Heart right ventricle (tissue), 16 donors: ENCODE measurements at regions of chr1 and their contacts with region 1.

Region 1: DNA sequence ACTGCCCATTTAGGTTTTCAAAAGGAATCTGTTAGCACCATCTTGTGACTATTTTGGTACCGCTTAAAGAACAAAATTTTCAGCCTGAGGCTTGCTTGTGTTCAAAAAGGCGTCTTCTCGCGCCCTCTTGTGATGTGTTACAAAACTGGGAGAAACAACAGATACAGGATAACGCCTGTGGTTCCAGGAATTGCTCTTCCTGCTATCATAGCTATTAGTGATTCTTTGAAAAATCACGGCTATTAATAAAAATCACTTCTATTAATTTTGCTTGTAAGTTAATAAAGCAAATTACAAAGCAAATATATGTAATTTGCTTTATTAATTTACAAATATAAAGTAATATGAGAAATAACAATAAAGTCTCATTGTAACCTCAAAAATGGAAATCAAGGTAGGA is 82.2 kb upstream of the ABCD3 start:
- DNase-seq: peak; percentile 18 to 86
- ATAC-seq: peak; percentile 73 to 94 (median 90)
- H3K4me3 ChIP-seq: peak overlapping the region in 1 of 10 donors; percentile 14
- H3K27ac ChIP-seq: peak overlapping the region in 5 of 10 donors; percentile 7 to 77 (median 69)
- H3K4me1 ChIP-seq: peaks cover 0 to 30% (median 16%) of the 10 kb centered on the region in 9 donors
- H3K27me3 ChIP-seq: no peaks in the 10 kb centered on the region
- CTCF ChIP-seq: peak; percentile 75 to 99 (median 88)

Region 2: DNA sequence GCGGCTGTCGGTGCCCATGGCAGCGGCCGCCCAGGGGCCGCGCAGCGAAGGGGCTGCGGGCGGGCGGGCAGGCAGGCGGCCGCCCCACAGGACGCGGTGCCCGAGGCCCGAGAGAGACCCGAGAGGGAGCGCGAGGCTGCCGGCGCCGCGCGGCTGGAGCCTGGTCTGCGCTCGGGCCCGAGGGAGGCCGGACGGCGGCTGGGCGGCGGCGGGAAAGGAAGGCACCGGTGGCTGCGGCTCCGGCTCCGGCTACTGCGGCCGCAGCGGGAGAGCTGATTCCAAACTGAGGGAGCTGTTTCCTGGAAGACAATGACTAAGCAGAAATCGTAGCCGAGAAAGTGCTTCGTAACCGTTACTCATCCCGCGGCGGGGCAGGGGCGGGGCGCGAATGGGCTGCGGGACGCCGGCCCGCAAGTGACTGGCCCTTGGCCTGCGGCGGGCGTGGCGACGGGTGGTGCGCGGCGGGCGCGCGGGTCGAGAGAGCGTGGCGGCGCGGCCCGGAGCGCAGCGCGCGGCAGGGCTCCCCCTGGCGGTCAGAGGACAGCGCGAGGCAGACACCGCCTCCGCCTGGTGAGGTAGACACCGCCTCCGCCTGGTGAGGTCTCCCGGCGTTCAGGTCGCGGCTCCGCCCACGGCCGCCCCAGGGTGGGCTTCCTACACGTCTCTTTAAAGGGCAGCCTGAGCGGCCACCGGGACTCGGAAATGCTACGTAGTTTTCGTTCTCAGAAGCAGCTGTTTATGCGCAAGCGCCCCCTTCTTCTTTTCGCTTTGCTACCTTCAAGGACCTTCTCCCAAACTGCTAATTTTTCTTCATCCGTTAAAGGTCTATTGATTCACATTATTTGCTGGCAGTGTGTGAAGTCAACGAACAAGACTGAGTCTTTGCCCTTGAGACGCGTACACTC is 426.6 kb before region 1 on chr1 and contains the start of gene GCLM:
- intact Hi-C with region 1: loop called in 2 of 10 experiments (anchors 5 kb)
- DNase-seq: peak; percentile 89 to 95
- ATAC-seq: peak; percentile 96 to 99 (median 98)
- H3K4me3 ChIP-seq: peak within 1 kb of the TSS; percentile 23 to 100 (median 85)
- H3K27ac ChIP-seq: peak within 1 kb of the TSS; percentile 38 to 97 (median 88)
- H3K4me1 ChIP-seq: peaks cover 6 to 40% (median 16%) of the 10 kb centered on the region in 9 donors
- H3K27me3 ChIP-seq: no peaks in the 10 kb centered on the region
- CTCF ChIP-seq: peak; percentile 73 to 99 (median 92)
- total RNA-seq, gene GCLM: 7.6 to 15.5 (median 10.6) TPM

Region 3: GRCh38 chr1:94025383-94026340 is 310.3 kb before region 1 on chr1:
- intact Hi-C with region 1: loop called in 8 of 10 experiments (anchors 1 to 5 kb)
- DNase-seq: peak in 1 of 2 donors; percentile 58
- ATAC-seq: peak in 5 of 8 donors; percentile 39 to 72 (median 56)
- H3K4me3 ChIP-seq: peak overlapping the region in 1 of 10 donors; percentile 8
- H3K27ac ChIP-seq: peak overlapping the region in 1 of 10 donors; percentile 11
- H3K4me1 ChIP-seq: peaks cover 0 to 34% (median 8%) of the 10 kb centered on the region in 9 donors
- H3K27me3 ChIP-seq: no peaks in the 10 kb centered on the region
- CTCF ChIP-seq: peak; percentile 70 to 90 (median 81)

Region 4: GRCh38 chr1:94045465-94046056 is 290.4 kb before region 1 on chr1:
- intact Hi-C with region 1: loop called in 9 of 10 experiments (anchors 1 to 5 kb)
- DNase-seq: peak; percentile 88 to 94
- ATAC-seq: peak; percentile 88 to 95 (median 92)
- H3K4me3 ChIP-seq: peak overlapping the region in 5 of 10 donors; percentile 8 to 21 (median 12)
- H3K27ac ChIP-seq: peak overlapping the region; percentile 81 to 98 (median 92)
- H3K4me1 ChIP-seq: peaks cover 23 to 85% (median 64%) of the 10 kb centered on the region in 9 donors
- H3K27me3 ChIP-seq: no peaks in the 10 kb centered on the region
- CTCF ChIP-seq: peak; percentile 50 to 89 (median 73)